Naive thymus-derived CD4-positive, alpha-beta T cell (primary cell): ENCODE measurements at regions of chr11 and their contacts with region 1.

Region 1: GRCh38 chr11:67606492-67607201 is at the start of gene NDUFV1:
- DNase-seq: peak; percentile 90 to 96 (median 94)
- ATAC-seq: peak; percentile 100
- H3K4me3 ChIP-seq: peak within 1 kb of the TSS; percentile 97
- H3K4me3 Mint-ChIP-seq: peak within 1 kb of the TSS; percentile 85 to 99 (median 93)
- H3K27ac ChIP-seq: peak within 1 kb of the TSS; percentile 87
- H3K27ac Mint-ChIP-seq: peak within 1 kb of the TSS; percentile 78 to 96 (median 93)
- H3K4me1 ChIP-seq: peaks cover 8 to 19% of the 10 kb centered on the region in 2 donors
- H3K4me1 Mint-ChIP-seq: peaks cover 0 to 36% (median 14%) of the 10 kb centered on the region in 7 donors
- H3K27me3 ChIP-seq: no peaks in the 10 kb centered on the region
- H3K27me3 Mint-ChIP-seq: peaks cover 0 to 16% (median 10%) of the 10 kb centered on the region in 5 donors
- total RNA-seq, gene NDUFV1: 198 to 253 (median 212) TPM

Region 2: DNA sequence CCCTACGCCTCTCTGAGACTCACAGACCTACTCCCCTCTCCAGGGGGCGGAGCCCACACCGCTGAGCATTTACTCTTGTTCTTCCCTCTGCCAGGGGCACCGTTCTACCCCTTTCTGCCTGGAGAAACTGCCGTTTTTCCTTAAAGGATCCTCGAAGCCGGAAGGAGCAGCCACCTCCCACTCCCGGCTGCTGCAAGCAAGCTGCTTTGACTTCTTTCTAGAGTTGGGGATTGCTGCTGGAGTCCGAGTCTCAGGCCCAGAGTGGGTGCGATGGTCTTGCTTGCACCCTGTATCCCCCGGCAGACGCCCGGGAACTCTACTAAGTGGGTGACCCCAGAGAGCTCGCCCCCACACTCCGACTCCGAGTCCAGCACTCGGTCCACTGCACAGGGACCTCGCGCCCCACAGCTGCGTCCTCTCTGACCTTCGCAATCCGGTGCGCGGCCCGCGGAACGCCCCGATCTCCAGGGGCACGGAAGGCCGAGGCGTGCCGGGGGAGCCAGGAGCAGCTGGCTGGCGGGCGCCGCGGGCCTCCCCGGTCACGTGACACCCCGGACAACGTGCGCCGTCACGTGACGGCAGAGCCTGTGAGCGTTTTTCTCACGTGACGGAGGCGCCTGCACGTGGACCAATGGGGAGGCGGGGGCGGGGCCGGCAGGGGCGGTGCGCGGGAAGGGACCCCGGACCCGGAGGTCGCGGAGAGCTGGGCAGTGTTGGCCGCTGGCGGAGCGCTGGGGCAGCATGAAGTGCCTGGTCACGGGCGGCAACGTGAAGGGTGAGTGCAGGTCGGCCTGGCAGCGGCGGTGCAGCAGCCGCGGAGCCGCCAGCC is 215.1 kb before region 1 on chr11 and contains the start of gene RAD9A:
- CTCF ChIA-PET with region 1: no interaction called
- POLR2A ChIA-PET with region 1: no interaction called
- intact Hi-C with region 1: loop called in 1 of 2 experiments (anchors 1 kb)
- DNase-seq: peak; percentile 80 to 94 (median 87)
- ATAC-seq: peak; percentile 90
- H3K4me3 ChIP-seq: peak within 1 kb of the TSS; percentile 49
- H3K4me3 Mint-ChIP-seq: peak within 1 kb of the TSS; percentile 84 to 95 (median 88)
- H3K27ac ChIP-seq: peak within 1 kb of the TSS; percentile 83
- H3K27ac Mint-ChIP-seq: peak within 1 kb of the TSS; percentile 47 to 92 (median 82)
- H3K4me1 ChIP-seq: peaks cover 15 to 16% of the 10 kb centered on the region in 2 donors
- H3K4me1 Mint-ChIP-seq: peaks cover 27 to 47% (median 34%) of the 10 kb centered on the region in 7 donors
- H3K27me3 ChIP-seq: no peaks in the 10 kb centered on the region
- H3K27me3 Mint-ChIP-seq: peaks cover 0 to 3% (median 0%) of the 10 kb centered on the region in 5 donors
- total RNA-seq, gene RAD9A: 25.6 to 48.0 (median 45.0) TPM

Region 3: GRCh38 chr11:67572747-67573419 is 33.8 kb before region 1 on chr11:
- CTCF ChIA-PET with region 1: interaction called, 4 read pairs
- POLR2A ChIA-PET with region 1: interaction called, 3 read pairs
- intact Hi-C with region 1: loop called (anchors 1 to 2 kb)
- DNase-seq: peak in 2 of 9 donors; percentile 12 to 14
- ATAC-seq: no peak
- H3K4me3 ChIP-seq: no peak overlapping the region
- H3K4me3 Mint-ChIP-seq: no peak overlapping the region
- H3K27ac ChIP-seq: no peak overlapping the region
- H3K27ac Mint-ChIP-seq: peak overlapping the region in 1 of 9 donors; percentile 19
- H3K4me1 ChIP-seq: no peaks in the 10 kb centered on the region
- H3K4me1 Mint-ChIP-seq: no peaks in the 10 kb centered on the region
- H3K27me3 ChIP-seq: no peaks in the 10 kb centered on the region
- H3K27me3 Mint-ChIP-seq: peaks cover 12 to 24% (median 21%) of the 10 kb centered on the region in 5 donors

Region 4: GRCh38 chr11:67630228-67630942 is 23.7 kb after region 1 on chr11:
- CTCF ChIA-PET with region 1: interaction called, 3 read pairs
- POLR2A ChIA-PET with region 1: interaction called, 3 read pairs
- intact Hi-C with region 1: loop called (anchors 1 kb)
- DNase-seq: peak in 8 of 9 donors; percentile 40 to 97 (median 86)
- ATAC-seq: peak; percentile 87
- H3K4me3 ChIP-seq: peak overlapping the region; percentile 84
- H3K4me3 Mint-ChIP-seq: peak overlapping the region; percentile 84 to 94 (median 89)
- H3K27ac ChIP-seq: peak overlapping the region; percentile 85
- H3K27ac Mint-ChIP-seq: peak overlapping the region; percentile 74 to 96 (median 89)
- H3K4me1 ChIP-seq: peaks cover 8 to 9% of the 10 kb centered on the region in 2 donors
- H3K4me1 Mint-ChIP-seq: peaks cover 5 to 15% (median 7%) of the 10 kb centered on the region in 7 donors
- H3K27me3 ChIP-seq: no peaks in the 10 kb centered on the region
- H3K27me3 Mint-ChIP-seq: no peaks in the 10 kb centered on the region

Region 5: GRCh38 chr11:68030318-68031138 is 423.9 kb after region 1 on chr11 and contains the start of gene NDUFS8:
- CTCF ChIA-PET with region 1: no interaction called
- POLR2A ChIA-PET with region 1: no interaction called
- intact Hi-C with region 1: loop called in 1 of 2 experiments (anchors 1 kb)
- DNase-seq: peak; percentile 83 to 99 (median 98)
- ATAC-seq: peak; percentile 98
- H3K4me3 ChIP-seq: peak within 1 kb of the TSS; percentile 98
- H3K4me3 Mint-ChIP-seq: peak within 1 kb of the TSS; percentile 90 to 99 (median 96)
- H3K27ac ChIP-seq: peak within 1 kb of the TSS; percentile 97
- H3K27ac Mint-ChIP-seq: peak within 1 kb of the TSS; percentile 73 to 98 (median 92)
- H3K4me1 ChIP-seq: peaks cover 11 to 16% of the 10 kb centered on the region in 2 donors
- H3K4me1 Mint-ChIP-seq: peaks cover 12 to 32% (median 23%) of the 10 kb centered on the region in 7 donors
- H3K27me3 ChIP-seq: no peaks in the 10 kb centered on the region
- H3K27me3 Mint-ChIP-seq: no peaks in the 10 kb centered on the region
- total RNA-seq, gene NDUFS8: 67.1 to 126 (median 80.1) TPM